Caco-2 (cell line): ENCODE measurements at regions of chr9 and their contacts with region 1.

Region 1: GRCh38 chr9:136007934-136008692 is 46.9 kb upstream of the UBAC1 start:
- DNase-seq: no peak
- H3K4me3 ChIP-seq: no peak overlapping the region
- H3K4me3 Mint-ChIP-seq: no peak overlapping the region
- H3K27ac Mint-ChIP-seq: peak overlapping the region; percentile 16
- H3K4me1 ChIP-seq: peaks cover 12% of the 10 kb centered on the region; the same call in 1 of the 2 replicates
- H3K4me1 Mint-ChIP-seq: peaks cover 16% of the 10 kb centered on the region
- H3K27me3 ChIP-seq: no peaks in the 10 kb centered on the region
- H3K27me3 Mint-ChIP-seq: no peaks in the 10 kb centered on the region
- CTCF ChIP-seq: no peak

Region 2: GRCh38 chr9:135971892-135972291 is 36.2 kb before region 1 on chr9:
- CTCF ChIA-PET with region 1: no interaction called
- POLR2A ChIA-PET with region 1: no interaction called
- intact Hi-C with region 1: no loop called
- DNase-seq: peak; percentile 94 to 96
- H3K4me3 ChIP-seq: no peak overlapping the region
- H3K4me3 Mint-ChIP-seq: no peak overlapping the region
- H3K27ac Mint-ChIP-seq: no peak overlapping the region
- H3K4me1 ChIP-seq: 0 out of 2 replicates have a peak, but pooled peaks cover 4% of the 10 kb centered on the region
- H3K4me1 Mint-ChIP-seq: peaks cover 5% of the 10 kb centered on the region
- H3K27me3 ChIP-seq: no peaks in the 10 kb centered on the region
- H3K27me3 Mint-ChIP-seq: peaks cover 7% of the 10 kb centered on the region
- CTCF ChIP-seq: no peak

Region 3: GRCh38 chr9:136051517-136052432 is 43.7 kb after region 1 on chr9:
- CTCF ChIA-PET with region 1: interaction called, 13 read pairs
- POLR2A ChIA-PET with region 1: no interaction called
- intact Hi-C with region 1: no loop called
- DNase-seq: peak; percentile 87 to 90
- H3K4me3 ChIP-seq: no peak overlapping the region
- H3K4me3 Mint-ChIP-seq: peak overlapping the region; percentile 31
- H3K27ac Mint-ChIP-seq: peak overlapping the region; percentile 86
- H3K4me1 ChIP-seq: peaks cover 30% of the 10 kb centered on the region
- H3K4me1 Mint-ChIP-seq: no peaks in the 10 kb centered on the region
- H3K27me3 ChIP-seq: no peaks in the 10 kb centered on the region
- H3K27me3 Mint-ChIP-seq: no peaks in the 10 kb centered on the region
- CTCF ChIP-seq: no peak

Region 4: DNA sequence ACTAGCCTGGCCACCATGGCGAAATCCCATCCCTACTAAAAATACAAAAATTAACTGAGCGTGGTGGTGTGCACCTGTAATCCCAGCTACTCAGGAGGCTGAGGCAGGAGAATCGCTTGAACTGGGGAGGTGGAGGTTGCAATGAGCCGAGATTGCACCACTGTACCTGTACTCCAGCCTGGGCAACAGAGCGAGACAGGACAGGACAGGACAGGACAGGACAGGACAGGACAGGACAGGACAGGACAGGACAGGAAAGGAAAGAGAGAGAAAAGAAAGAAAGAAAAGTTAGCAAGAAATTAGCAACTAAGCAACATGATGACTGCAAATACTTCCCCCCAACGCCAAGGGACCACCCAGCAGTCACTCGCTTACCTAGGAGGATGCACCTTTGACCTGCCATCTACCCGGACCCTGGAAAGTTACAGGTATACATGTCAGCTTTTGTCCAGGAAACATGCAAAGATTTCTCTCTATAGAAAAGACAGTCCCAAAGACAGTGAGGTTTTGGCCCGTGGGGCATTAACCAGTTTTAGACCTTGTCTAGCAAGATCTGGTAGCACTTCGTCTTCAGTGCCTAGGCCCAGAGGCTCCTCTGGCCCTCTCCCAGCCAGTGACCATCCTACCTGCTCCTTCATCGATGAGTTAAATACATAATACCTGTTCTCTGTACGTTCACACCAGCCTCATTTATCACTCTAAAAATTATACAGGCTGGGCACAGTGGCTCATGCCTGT is 54.0 kb after region 1 on chr9:
- CTCF ChIA-PET with region 1: no interaction called
- POLR2A ChIA-PET with region 1: no interaction called
- intact Hi-C with region 1: no loop called
- DNase-seq: no peak
- H3K4me3 ChIP-seq: no peak overlapping the region
- H3K4me3 Mint-ChIP-seq: no peak overlapping the region
- H3K27ac Mint-ChIP-seq: peak overlapping the region; percentile 32
- H3K4me1 ChIP-seq: no peaks in the 10 kb centered on the region
- H3K4me1 Mint-ChIP-seq: peaks cover 5% of the 10 kb centered on the region
- H3K27me3 ChIP-seq: no peaks in the 10 kb centered on the region
- H3K27me3 Mint-ChIP-seq: no peaks in the 10 kb centered on the region
- CTCF ChIP-seq: no peak

Region 5: GRCh38 chr9:136138566-136138965 is 130.5 kb after region 1 on chr9:
- CTCF ChIA-PET with region 1: no interaction called
- POLR2A ChIA-PET with region 1: no interaction called
- intact Hi-C with region 1: no loop called
- DNase-seq: peak; percentile 61 to 69
- H3K4me3 ChIP-seq: no peak overlapping the region
- H3K4me3 Mint-ChIP-seq: no peak overlapping the region
- H3K27ac Mint-ChIP-seq: no peak overlapping the region
- H3K4me1 ChIP-seq: peaks cover 8% of the 10 kb centered on the region
- H3K4me1 Mint-ChIP-seq: no peaks in the 10 kb centered on the region
- H3K27me3 ChIP-seq: no peaks in the 10 kb centered on the region
- H3K27me3 Mint-ChIP-seq: no peaks in the 10 kb centered on the region
- CTCF ChIP-seq: peak; percentile 31 to 36